ENCODE measurements at regions of chr20 and their contacts with region 1.

Region 1: DNA sequence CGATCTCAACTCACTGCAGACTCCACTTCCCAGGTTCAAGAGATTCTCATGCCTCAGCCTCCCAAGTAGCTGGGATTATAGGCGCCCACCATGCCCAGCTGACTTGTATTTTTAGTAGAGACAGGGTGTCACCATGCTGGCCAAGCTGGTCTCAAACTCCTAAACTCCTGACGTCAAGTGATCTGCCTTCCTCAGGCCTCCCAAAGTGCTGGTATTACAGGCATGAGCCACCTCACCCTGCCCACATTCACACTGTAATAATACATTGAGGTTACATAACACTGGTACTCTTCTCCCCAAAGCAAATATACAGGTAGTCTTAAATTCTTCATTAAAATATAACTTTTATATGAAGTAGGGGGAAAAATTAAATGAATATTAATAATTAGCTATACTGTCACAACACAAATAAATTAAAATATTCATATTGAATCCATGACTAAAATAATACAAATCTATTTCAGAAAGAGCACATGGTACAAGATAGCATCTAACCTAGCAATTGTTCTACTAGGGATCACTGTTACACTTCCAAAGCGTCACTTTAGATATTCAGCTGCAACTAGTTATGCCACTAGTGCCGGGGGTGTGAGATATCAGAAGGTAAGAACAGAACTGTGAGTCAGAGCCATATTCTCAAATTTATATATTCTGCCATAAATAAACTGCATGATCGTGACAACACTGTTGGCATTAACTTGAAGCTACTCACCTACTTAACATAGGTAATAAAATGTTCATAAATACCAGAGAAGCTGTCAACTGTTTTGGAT is 169.1 kb upstream of the SHLD1 start:
- DNase-seq: no peak
- H3K4me3 ChIP-seq: no peak overlapping the region
- H3K4me3 Mint-ChIP-seq: no peak overlapping the region
- H3K27ac ChIP-seq: no peak overlapping the region
- H3K27ac Mint-ChIP-seq: peak overlapping the region in 3 of 8 donors; percentile 17 to 61 (median 59)
- H3K4me1 ChIP-seq: peaks cover 2% of the 10 kb centered on the region
- H3K4me1 Mint-ChIP-seq: peaks cover 15 to 42% (median 38%) of the 10 kb centered on the region in 3 donors
- H3K27me3 ChIP-seq: no peaks in the 10 kb centered on the region
- H3K27me3 Mint-ChIP-seq: no peaks in the 10 kb centered on the region

Region 2: DNA sequence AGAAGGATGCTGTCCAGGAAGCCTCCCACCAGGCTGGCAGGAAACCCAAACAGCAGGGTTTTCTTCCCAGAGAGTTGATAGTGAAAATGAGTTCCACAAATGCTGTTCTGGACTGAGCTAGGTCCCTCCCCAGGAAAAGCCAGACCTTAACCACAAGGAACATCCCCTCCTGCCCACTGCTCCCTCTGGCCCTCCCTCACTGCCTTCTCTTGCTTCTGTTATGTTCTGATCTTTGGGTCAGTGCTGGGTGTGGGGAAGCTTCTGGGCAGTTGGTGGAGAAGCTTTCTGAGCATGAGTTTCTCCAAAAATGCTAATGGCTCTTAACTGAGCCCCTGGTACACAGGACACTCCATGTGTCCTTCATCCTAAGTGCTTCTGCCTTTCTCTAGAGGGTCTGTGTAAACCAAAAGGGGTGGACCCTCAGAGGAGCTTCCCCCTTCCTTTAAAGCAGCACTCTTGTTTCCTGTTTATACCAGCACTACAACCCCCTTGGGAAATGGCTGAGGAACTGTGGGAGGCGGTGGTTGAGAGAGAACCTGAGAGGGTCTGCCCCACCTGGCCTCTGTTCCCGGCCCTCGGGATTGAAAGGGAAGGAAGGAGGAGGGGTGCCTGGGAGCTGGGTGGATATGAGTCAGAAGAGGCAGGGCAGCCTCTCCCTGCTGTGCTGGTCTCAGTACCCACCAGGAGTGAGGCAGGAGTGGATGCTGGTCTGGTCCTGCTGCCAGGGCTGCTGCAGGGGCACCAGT is 412.3 kb before region 1 on chr20:
- CTCF ChIA-PET with region 1: no interaction called
- POLR2A ChIA-PET with region 1: no interaction called
- DNase-seq: peak in 2 of 5 donors; percentile 1 to 6
- H3K4me3 ChIP-seq: no peak overlapping the region
- H3K4me3 Mint-ChIP-seq: peak overlapping the region in 5 of 7 donors; percentile 23 to 73 (median 32)
- H3K27ac ChIP-seq: no peak overlapping the region
- H3K27ac Mint-ChIP-seq: peak overlapping the region; percentile 68 to 96 (median 84)
- H3K4me1 ChIP-seq: peaks cover 26% of the 10 kb centered on the region
- H3K4me1 Mint-ChIP-seq: peaks cover 64 to 96% (median 78%) of the 10 kb centered on the region in 3 donors
- H3K27me3 ChIP-seq: no peaks in the 10 kb centered on the region
- H3K27me3 Mint-ChIP-seq: peaks cover 0 to 1% of the 10 kb centered on the region in 2 donors

Region 3: GRCh38 chr20:5642155-5642981 is 61.2 kb after region 1 on chr20:
- CTCF ChIA-PET with region 1: no interaction called
- POLR2A ChIA-PET with region 1: no interaction called
- DNase-seq: no peak
- H3K4me3 ChIP-seq: no peak overlapping the region
- H3K4me3 Mint-ChIP-seq: no peak overlapping the region
- H3K27ac ChIP-seq: no peak overlapping the region
- H3K27ac Mint-ChIP-seq: peak overlapping the region in 3 of 8 donors; percentile 20 to 86 (median 37)
- H3K4me1 ChIP-seq: peaks cover 13% of the 10 kb centered on the region
- H3K4me1 Mint-ChIP-seq: peaks cover 0 to 19% (median 5%) of the 10 kb centered on the region in 3 donors
- H3K27me3 ChIP-seq: no peaks in the 10 kb centered on the region
- H3K27me3 Mint-ChIP-seq: peaks cover 0 to 6% of the 10 kb centered on the region in 2 donors

Region 4: GRCh38 chr20:5788385-5788895 is 207.3 kb after region 1 on chr20:
- CTCF ChIA-PET with region 1: interaction called, 10 read pairs
- POLR2A ChIA-PET with region 1: no interaction called
- DNase-seq: peak; percentile 57 to 84 (median 74)
- H3K4me3 ChIP-seq: no peak overlapping the region
- H3K4me3 Mint-ChIP-seq: no peak overlapping the region
- H3K27ac ChIP-seq: no peak overlapping the region
- H3K27ac Mint-ChIP-seq: peak overlapping the region in 4 of 8 donors; percentile 39 to 87 (median 45)
- H3K4me1 ChIP-seq: no peaks in the 10 kb centered on the region
- H3K4me1 Mint-ChIP-seq: peaks cover 2 to 18% (median 14%) of the 10 kb centered on the region in 3 donors
- H3K27me3 ChIP-seq: no peaks in the 10 kb centered on the region
- H3K27me3 Mint-ChIP-seq: no peaks in the 10 kb centered on the region